Common myeloid progenitor, CD34-positive (primary cell): ENCODE measurements at regions of chr5 and their contacts with region 1.

Region 1: DNA sequence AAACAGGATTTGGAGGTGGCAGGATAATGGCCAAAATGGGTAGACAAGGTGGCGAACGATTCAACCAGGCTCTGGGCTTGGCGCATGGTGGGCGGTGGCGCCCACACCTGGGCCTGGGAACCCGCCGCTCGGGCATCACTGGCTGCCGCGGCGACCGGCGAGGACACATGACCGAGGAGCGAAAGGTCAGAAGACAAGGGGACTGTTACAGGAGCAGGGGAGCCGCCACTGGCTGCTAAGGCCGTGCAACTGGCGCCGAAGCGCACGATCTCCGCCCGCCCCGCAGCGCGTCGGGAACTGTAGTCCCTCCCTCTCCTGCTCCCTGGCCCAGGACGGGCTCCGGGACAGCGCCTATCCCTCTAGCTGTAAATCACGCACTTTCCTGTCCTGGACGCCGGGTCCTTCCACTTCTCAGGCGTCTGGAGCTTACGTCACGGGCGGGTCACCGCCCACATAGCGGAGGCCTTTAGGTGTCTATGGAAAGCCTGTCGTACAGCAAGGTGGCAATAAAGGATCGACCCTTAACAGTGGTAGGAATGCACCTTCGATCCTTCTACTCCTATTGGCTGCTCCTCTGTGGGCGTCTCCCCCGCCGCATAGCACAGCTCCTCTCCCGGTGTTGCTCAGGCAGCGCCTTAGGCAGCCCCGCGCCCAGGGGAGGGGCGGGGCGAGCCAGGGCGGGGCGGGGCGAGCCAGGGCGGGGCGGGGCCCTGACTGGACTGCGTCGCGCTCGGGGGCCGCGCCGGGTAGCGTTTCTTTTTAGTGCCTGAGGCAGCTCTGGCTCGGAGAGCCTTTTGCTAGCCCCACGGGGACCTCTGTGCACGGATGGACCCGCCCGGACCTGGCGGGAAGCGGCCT is at the start of gene ICE1:
- DNase-seq: peak; percentile 96 to 98 (median 97)
- H3K4me3 ChIP-seq: peak within 1 kb of the TSS; percentile 83 to 94 (median 91)
- H3K27ac ChIP-seq: peak within 1 kb of the TSS; percentile 95 to 98
- H3K4me1 ChIP-seq: peaks cover 17 to 35% (median 29%) of the 10 kb centered on the region in 4 experiments
- H3K27me3 ChIP-seq: peaks cover 0 to 2% (median 0%) of the 10 kb centered on the region in 5 experiments

Region 2: DNA sequence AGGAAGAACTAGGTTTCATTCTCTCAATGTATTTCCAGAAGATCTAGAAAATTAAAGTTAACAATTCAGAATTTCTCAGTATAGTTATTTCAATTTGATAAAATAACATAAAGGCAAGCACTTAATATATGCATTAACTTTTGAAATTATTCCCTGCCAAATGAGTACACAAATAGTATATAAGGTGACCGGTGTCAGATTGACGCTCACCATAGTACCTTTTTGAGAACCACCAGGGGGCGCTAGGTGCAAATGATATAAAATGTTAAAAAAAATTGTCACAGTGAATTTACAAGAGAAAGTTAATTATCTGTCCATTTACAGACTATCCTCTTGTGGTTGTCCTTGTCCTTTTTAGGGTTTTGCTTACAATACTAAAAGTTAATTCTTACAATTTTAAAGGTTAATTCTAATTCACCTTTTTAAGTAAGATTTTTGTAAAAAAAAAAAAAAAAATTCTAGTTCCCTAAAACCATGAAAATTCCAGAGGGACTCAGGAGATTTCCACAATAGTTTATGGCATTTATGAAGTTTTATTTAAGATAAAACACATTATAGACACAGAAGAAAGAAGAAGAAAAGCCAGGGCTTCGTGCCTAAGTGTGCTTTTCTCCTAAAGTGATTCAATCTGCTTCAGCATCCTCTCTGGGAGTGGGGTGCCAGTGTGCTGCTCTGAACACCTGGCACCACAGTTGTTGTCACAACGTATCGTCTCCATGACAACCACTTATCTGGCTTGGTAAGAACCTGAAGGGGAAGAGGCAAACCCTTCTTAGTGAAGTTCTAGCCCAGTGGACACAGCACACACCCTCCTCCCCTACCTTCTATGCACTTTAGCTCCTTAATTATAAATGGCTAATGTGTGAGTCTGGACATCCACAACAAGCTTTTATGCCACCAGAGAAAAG is 280.3 kb before region 1 on chr5:
- CTCF ChIA-PET with region 1: interaction called, 13 read pairs
- POLR2A ChIA-PET with region 1: no interaction called
- DNase-seq: peak; percentile 60 to 81 (median 75)
- H3K4me3 ChIP-seq: no peak overlapping the region
- H3K27ac ChIP-seq: no peak overlapping the region
- H3K4me1 ChIP-seq: peaks cover 0 to 10% (median 4%) of the 10 kb centered on the region in 4 experiments
- H3K27me3 ChIP-seq: peaks cover 9 to 40% (median 13%) of the 10 kb centered on the region in 5 experiments